Activated CD4-positive, alpha-beta T cell treated with anti-CD3 and anti-CD28 coated beads, Interleukin-2, amount 10 ng/mL, durations not matched to agents 24 days and 14 days (primary cell): ENCODE measurements at regions of chr9 and their contacts with region 1.

Region 1: GRCh38 chr9:132877824-132878694 is at the start of gene AK8:
- DNase-seq: peak; percentile 95
- H3K4me3 Mint-ChIP-seq: peak within 1 kb of the TSS; percentile 81
- H3K27ac Mint-ChIP-seq: peak within 1 kb of the TSS; percentile 66
- H3K4me1 Mint-ChIP-seq: peaks cover 28% of the 10 kb centered on the region
- H3K27me3 Mint-ChIP-seq: peaks cover 5% of the 10 kb centered on the region
- total RNA-seq, gene AK8: 0.33 TPM in 1 of 2 replicates, not detected in the other

Region 2: GRCh38 chr9:132944302-132945185 is 66.5 kb after region 1 on chr9 and contains the start of gene TSC1:
- intact Hi-C with region 1: loop called (anchors 1 kb)
- DNase-seq: peak; percentile 98
- H3K4me3 Mint-ChIP-seq: peak within 1 kb of the TSS; percentile 96
- H3K27ac Mint-ChIP-seq: peak within 1 kb of the TSS; percentile 100
- H3K4me1 Mint-ChIP-seq: peaks cover 16% of the 10 kb centered on the region
- H3K27me3 Mint-ChIP-seq: peaks cover 2% of the 10 kb centered on the region
- total RNA-seq, gene TSC1: 27.9 and 33.5 TPM in 2 replicates